Thyroid gland (tissue), 4 donors: ENCODE measurements at regions of chrX and their contacts with region 1.

Region 1: GRCh38 chrX:119516157-119516702 is 48.0 kb downstream of the SLC25A5 start:
- DNase-seq: peak; percentile 17 to 21
- H3K4me3 ChIP-seq: no peak overlapping the region
- H3K27ac ChIP-seq: no peak overlapping the region
- H3K4me1 ChIP-seq: no peaks in the 10 kb centered on the region
- H3K27me3 ChIP-seq: no peaks in the 10 kb centered on the region
- CTCF ChIP-seq: peak; percentile 28 to 73 (median 70)
- POLR2A ChIP-seq: no peak

Region 2: GRCh38 chrX:119693040-119693995 is 177.1 kb after region 1 on chrX and contains the start of gene SEPTIN6:
- intact Hi-C with region 1: loop called (anchors 10 kb)
- DNase-seq: peak; percentile 45 to 57
- H3K4me3 ChIP-seq: peak within 1 kb of the TSS; percentile 15 to 45 (median 17)
- H3K27ac ChIP-seq: peak within 1 kb of the TSS in 1 of 3 donors; percentile 38
- H3K4me1 ChIP-seq: no peaks in the 10 kb centered on the region
- H3K27me3 ChIP-seq: no peaks in the 10 kb centered on the region
- CTCF ChIP-seq: no peak
- POLR2A ChIP-seq: peak in 1 of 2 donors; percentile 43
- total RNA-seq, gene SEPTIN6: 6.1 to 15.0 (median 14.6) TPM

Region 3: GRCh38 chrX:119729408-119730201 is 213.4 kb after region 1 on chrX:
- intact Hi-C with region 1: loop called (anchors 10 kb)
- DNase-seq: peak; percentile 40 to 45
- H3K4me3 ChIP-seq: no peak overlapping the region
- H3K27ac ChIP-seq: no peak overlapping the region
- H3K4me1 ChIP-seq: no peaks in the 10 kb centered on the region
- H3K27me3 ChIP-seq: no peaks in the 10 kb centered on the region
- CTCF ChIP-seq: peak in 4 of 6 experiments; percentile 41 to 54 (median 50)
- POLR2A ChIP-seq: no peak